ENCODE measurements at regions of chr10 and their contacts with region 1.

Region 1: GRCh38 chr10:119207367-119207668 is at the start of gene GRK5:
- DNase-seq: peak; percentile 95 to 96
- H3K4me3 ChIP-seq: peak within 1 kb of the TSS in 2 of 3 donors; percentile 51 to 63
- H3K27ac ChIP-seq: peak within 1 kb of the TSS; percentile 92 to 97 (median 95)
- H3K4me1 ChIP-seq: peaks cover 33% of the 10 kb centered on the region in 2 donors
- H3K27me3 ChIP-seq: no peaks in the 10 kb centered on the region
- CTCF ChIP-seq: no peak
- POLR2A ChIP-seq: peak in 1 of 2 donors; percentile 86
- total RNA-seq, gene GRK5: 9.2 to 27.3 (median 15.0) TPM

Region 2: GRCh38 chr10:119315128-119316001 is 108.0 kb after region 1 on chr10:
- intact Hi-C with region 1: loop called (anchors 5 kb)
- DNase-seq: peak; percentile 42 to 43
- H3K4me3 ChIP-seq: no peak overlapping the region
- H3K27ac ChIP-seq: peak overlapping the region; percentile 4 to 90 (median 84)
- H3K4me1 ChIP-seq: peaks cover 51 to 78% of the 10 kb centered on the region in 2 donors
- H3K27me3 ChIP-seq: no peaks in the 10 kb centered on the region
- CTCF ChIP-seq: no peak
- POLR2A ChIP-seq: no peak

Region 3: DNA sequence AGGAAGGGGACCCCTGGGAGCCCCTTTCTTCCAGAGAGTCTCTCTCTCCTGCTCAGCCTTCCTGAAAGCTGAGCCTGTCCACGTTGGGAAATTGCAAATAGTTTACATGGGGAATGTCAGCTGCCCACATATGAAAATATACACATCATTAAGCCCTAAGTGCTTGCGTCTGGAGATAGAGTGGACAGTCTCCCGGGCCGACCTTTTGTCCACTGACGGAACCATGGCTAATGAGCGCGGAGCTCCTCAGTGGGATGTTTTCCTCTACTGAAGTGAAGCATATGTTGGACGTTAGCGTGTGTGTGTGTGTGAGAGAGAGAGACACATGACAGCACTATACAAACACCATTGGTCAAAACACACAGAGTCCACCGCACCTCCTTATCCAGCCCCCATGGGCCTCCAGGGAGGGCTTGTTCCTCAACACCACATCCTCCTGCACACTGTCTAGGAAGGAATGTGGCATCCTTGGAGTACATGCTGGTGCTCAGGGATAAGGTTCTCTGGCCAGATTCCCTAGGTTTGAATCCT is 206.8 kb after region 1 on chr10:
- intact Hi-C with region 1: loop called (anchors 2 kb)
- DNase-seq: peak; percentile 39 to 46
- H3K4me3 ChIP-seq: no peak overlapping the region
- H3K27ac ChIP-seq: peak overlapping the region; percentile 75 to 95 (median 95)
- H3K4me1 ChIP-seq: peaks cover 48 to 56% of the 10 kb centered on the region in 2 donors
- H3K27me3 ChIP-seq: no peaks in the 10 kb centered on the region
- CTCF ChIP-seq: no peak
- POLR2A ChIP-seq: no peak

Region 4: GRCh38 chr10:119445311-119445934 is 238.1 kb after region 1 on chr10:
- intact Hi-C with region 1: loop called (anchors 2 kb)
- DNase-seq: peak; percentile 83 to 89
- H3K4me3 ChIP-seq: no peak overlapping the region
- H3K27ac ChIP-seq: no peak overlapping the region
- H3K4me1 ChIP-seq: peaks cover 0 to 29% of the 10 kb centered on the region in 2 donors
- H3K27me3 ChIP-seq: no peaks in the 10 kb centered on the region
- CTCF ChIP-seq: peak; percentile 81 to 96 (median 90)
- POLR2A ChIP-seq: no peak

Measured in thyroid gland (tissue), 4 donors.